BJ (cell line): ENCODE measurements at regions of chr2 and their contacts with region 1.

Region 1: GRCh38 chr2:64653349-64654062 is at the start of gene SERTAD2:
- DNase-seq: no peak
- H3K4me3 ChIP-seq: peak within 1 kb of the TSS; percentile 81
- H3K27me3 ChIP-seq: no peaks in the 10 kb centered on the region
- CTCF ChIP-seq: no peak; the same call in 1 of the 2 replicates
- polyA plus RNA-seq, gene SERTAD2: 6.2 and 8.7 TPM in 2 replicates

Region 2: GRCh38 chr2:64534363-64534762 is 119.1 kb before region 1 on chr2:
- CTCF ChIA-PET with region 1: no interaction called
- POLR2A ChIA-PET with region 1: no interaction called
- DNase-seq: no peak
- H3K4me3 ChIP-seq: no peak overlapping the region
- H3K27me3 ChIP-seq: no peaks in the 10 kb centered on the region
- CTCF ChIP-seq: no peak

Region 3: GRCh38 chr2:64688909-64689308 is 35.4 kb after region 1 on chr2:
- CTCF ChIA-PET with region 1: no interaction called
- POLR2A ChIA-PET with region 1: interaction called, 12 read pairs
- DNase-seq: no peak
- H3K4me3 ChIP-seq: no peak overlapping the region
- H3K27me3 ChIP-seq: no peaks in the 10 kb centered on the region
- CTCF ChIP-seq: no peak

Region 4: DNA sequence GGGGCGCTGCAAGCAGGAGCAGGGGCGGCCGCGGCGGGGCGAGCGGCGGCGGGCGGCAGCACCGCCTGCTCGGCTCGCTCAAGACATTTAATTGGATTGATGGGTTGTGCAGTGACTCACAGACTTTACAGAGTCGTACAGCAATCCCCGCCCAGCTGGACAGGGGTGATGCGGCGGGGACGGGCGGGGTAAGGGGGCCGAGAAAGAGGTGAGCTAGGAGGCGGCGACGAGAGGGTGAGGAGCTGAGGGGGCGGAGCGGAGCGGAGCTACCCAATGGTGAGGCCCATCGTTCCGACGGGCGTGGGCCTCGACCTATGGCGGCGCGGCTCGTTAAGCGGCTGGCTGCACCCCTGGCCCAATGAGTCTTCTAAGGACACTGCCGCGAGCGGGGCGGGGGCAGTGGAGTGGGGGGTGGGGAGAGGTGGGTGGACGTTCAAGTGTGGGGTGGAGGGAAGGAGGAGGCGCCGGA is 97.3 kb after region 1 on chr2:
- CTCF ChIA-PET with region 1: interaction called, 9 read pairs
- POLR2A ChIA-PET with region 1: interaction called, 14 read pairs
- DNase-seq: peak; percentile 99
- H3K4me3 ChIP-seq: peak overlapping the region; percentile 72
- H3K27me3 ChIP-seq: no peaks in the 10 kb centered on the region
- CTCF ChIP-seq: no peak

Region 5: DNA sequence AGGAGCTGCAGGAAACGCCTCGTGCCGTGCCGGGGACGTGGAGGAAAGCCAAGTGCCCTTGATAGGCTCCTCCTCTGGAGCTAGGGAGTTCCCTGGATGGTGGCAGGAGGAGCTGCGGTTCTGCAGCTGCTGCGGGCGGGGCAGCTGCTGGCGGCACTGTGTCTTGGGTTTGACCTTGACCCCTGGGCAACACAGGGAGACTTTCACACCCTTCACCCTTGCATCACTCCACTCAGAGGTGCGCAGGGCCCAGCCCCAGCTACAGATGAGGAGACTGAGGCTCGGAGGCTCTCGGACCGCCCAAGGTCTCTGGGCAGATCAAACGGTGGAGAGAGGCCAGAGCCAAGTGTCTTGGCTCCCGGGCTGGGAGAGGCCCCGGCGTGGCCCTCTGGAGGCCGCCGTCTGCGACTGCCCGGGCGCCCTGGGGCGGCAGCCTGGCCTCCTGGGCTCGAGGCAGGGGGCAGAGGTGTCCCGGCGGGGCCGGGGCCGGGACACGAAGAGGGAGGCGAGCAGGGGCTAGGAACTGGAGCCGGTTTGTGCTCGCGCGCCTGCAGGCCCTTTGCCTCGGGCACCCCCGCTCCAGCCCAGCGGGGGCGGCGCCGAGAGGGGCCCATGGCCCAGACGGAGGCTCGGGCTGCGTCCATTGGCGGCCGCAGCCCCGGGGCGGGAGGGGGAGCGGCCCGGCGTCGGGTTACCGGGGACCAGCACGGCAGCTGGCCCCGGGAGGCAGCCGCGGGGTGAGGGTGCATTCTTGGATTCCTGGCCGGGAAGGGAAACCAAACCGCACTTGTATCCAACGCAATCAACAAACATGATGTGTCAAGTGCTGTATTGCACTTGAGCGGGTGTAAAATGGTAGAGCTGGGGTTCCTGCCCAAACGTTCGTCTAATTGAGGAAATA is 206.1 kb after region 1 on chr2:
- CTCF ChIA-PET with region 1: interaction called, 15 read pairs
- POLR2A ChIA-PET with region 1: interaction called, 6 read pairs
- DNase-seq: peak; percentile 70
- H3K4me3 ChIP-seq: peak overlapping the region; percentile 33
- H3K27me3 ChIP-seq: no peaks in the 10 kb centered on the region
- CTCF ChIP-seq: no peak